AG04449 (cell line): ENCODE measurements at regions of chr11 and their contacts with region 1.

Region 1: GRCh38 chr11:19903620-19904069 is 191.0 kb downstream of the NAV2 start:
- DNase-seq: no peak
- H3K4me3 ChIP-seq: no peak overlapping the region
- CTCF ChIP-seq: peak; percentile 79

Region 2: DNA sequence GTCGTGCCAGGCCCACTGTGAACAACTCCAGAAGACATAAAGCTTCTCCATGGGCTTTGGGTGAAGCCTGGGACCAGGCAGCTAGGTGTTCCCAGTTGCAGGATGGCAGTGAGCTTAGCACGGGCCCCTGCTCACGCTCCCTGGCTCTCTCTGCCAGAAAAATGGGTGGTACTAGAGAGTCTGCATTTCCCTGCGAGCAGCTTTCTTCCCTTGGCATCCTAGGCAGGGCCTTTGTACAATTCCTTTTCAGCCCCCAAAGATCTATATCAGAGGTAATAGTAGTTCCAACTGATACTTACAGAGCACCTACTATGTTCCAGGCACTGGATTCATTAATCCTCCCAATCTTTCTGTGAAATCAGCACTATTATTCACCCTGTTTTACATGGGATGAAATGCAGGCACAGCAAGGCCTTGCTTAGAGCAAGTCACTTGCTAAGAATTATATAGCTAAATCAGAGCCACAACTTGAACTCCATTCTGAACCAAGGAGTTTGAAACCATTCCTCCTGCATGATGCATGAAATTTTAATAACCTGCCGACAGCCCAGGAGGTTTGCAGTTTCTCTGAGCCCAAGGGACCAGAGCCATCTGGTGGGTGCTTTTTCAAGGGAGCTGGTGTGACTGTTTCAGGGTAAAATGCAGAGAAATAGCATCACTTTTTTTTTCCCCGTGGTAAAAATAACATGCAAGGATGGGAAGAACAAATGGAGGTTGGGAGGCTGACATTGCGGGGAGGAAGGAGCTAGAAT is 168.3 kb before region 1 on chr11:
- CTCF ChIA-PET with region 1: interaction called, 38 read pairs
- POLR2A ChIA-PET with region 1: no interaction called
- DNase-seq: peak; percentile 63
- H3K4me3 ChIP-seq: no peak overlapping the region
- CTCF ChIP-seq: peak; percentile 42

Region 3: GRCh38 chr11:19756675-19757475 is 146.8 kb before region 1 on chr11:
- CTCF ChIA-PET with region 1: interaction called, 11 read pairs
- POLR2A ChIA-PET with region 1: no interaction called
- DNase-seq: no peak
- H3K4me3 ChIP-seq: no peak overlapping the region
- CTCF ChIP-seq: no peak

Region 4: DNA sequence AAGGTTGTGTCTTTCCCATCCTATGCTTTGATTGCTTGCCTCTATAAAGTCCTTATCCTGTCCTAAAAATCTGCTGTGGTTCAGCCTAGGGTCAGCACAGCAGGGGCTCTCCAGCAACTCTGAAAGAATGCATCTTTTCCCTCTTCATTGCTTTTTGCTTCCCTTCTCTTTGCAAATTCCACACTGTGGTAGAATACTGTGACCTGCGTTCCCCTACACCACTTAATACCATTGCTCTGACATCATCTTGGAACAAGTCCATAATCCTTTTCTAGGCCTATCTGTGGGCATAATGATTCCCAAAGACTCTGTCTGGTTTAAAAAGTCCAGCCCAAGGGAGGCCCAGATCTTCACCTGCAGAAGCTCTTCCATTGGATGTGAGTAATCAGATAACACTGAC is 13.3 kb before region 1 on chr11:
- CTCF ChIA-PET with region 1: interaction called, 43 read pairs
- POLR2A ChIA-PET with region 1: no interaction called
- DNase-seq: peak; percentile 79
- H3K4me3 ChIP-seq: no peak overlapping the region
- CTCF ChIP-seq: no peak

Region 5: GRCh38 chr11:19938169-19938856 is 34.7 kb after region 1 on chr11:
- CTCF ChIA-PET with region 1: interaction called, 42 read pairs
- POLR2A ChIA-PET with region 1: no interaction called
- DNase-seq: no peak
- H3K4me3 ChIP-seq: no peak overlapping the region
- CTCF ChIP-seq: peak; percentile 65

Region 6: DNA sequence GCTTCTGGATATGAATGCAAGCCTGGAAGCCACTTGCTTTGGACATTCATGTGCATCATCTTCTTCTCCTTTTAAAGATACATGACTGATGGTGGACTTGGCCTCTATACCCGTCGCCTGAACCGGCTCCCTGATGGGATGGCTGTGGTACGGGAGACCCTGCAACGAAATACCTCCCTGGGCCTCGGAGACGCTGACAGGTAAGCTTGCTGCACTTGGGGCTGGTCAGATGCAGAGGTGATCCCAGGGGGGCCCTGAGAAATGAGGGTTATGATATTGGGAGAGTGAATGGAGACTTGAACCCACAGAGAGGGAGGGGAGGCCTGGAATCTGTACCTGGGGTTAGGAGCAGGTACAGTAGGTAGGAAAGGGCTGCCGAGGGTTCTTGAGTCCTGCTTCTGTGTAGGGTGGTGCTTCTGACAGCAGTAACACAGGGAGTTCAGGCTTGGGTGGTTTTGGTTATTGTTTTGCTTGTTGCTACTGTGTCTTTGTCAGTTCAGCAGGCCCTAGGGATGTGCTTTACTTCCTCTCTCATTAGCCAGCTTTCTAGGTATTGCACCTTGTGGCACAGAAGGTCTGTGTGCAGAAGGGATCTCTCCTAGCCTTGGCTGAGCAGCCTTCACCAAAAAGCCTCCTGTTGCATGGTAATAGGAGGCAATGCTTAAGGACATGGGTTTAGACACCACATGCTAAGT is 80.5 kb after region 1 on chr11:
- CTCF ChIA-PET with region 1: no interaction called
- POLR2A ChIA-PET with region 1: no interaction called
- DNase-seq: no peak
- H3K4me3 ChIP-seq: no peak overlapping the region
- CTCF ChIP-seq: no peak

Region 7: DNA sequence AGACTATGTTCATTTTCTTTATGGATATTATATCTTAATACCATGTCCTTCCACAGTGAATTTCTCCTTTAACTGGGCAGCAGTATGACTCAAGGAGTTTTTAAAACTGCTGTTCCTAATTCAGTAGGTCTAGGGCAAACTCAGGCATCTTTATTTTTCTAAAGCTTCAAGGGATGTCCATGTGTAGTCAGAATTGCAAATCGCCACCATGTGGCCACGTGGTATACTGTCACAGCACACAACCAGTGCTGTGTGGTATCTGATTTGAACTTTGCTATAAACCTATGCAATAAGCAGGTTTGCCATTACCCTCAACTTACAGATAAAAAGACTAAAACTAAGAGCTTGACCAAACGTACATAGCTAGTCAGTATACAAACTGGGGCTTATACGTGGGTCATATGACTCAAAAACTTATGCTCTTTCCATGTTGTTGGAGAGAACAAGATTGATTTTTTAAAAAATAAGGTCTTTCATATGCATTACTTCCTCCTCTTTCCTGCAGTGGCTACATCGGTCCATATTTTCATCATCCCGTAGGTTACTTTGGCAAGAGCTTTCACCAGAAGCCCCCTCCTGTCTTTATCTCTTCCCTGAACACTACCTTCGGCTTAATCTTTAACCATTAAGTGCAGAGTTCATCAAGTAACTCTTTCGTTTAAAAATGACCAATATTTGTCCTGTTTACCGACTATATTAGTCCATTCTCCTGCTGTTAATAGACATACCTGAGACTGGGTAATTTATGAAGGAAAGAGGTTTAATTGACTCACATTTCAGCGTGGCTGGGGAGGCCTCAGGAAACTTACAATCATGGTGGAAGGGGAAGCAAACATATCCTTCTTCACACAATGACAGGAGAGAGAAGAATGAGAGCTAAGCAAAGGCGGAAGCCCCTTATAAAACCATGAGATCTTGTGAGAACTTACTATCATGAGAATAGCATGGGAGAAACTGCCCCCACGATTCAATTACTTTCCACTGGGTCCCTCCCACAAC is 451.9 kb after region 1 on chr11:
- CTCF ChIA-PET with region 1: interaction called, 59 read pairs
- POLR2A ChIA-PET with region 1: no interaction called
- DNase-seq: no peak
- H3K4me3 ChIP-seq: no peak overlapping the region
- CTCF ChIP-seq: peak; percentile 58